B cell (primary cell): ENCODE measurements at regions of chr19 and their contacts with region 1.

Region 1: DNA sequence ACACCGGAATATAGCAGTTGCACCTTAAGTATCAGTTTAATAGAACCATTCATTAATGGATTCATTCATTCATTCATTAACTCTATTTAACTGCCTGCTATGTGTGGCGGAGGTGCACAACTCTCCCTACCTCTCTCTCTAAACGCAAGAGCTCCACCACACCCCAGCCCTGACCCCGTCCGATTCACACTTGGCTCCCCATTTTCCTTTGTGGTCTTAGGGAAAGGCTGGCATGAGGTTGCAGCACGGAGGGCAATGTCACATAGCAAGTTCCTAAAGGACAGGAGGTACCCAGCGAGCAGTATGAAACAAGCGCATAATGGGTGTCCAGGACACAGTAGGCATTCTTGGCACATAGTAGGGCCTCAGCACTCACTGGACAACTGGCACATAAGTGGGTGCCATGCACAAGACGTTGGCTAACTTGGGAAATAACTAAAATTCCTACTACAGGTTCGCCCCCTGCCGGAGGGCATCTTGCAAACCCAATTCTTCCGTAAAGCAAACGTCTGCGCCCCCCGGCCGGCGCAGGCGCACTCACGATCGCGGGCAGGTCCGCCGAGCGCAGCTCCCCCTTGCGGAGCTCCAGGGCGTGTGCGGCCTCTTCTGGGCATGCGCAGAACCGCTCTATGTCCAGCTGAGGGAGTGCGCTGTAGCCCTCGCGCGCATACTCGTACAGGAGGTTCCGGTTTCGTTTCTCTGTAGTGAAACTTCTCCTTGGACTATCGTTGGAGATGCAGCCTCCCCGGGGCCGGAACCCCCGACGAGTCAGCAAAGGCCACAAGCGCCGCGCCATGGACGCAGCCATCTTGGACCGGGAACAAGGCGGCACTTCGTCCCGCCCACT is at the start of gene SARS2:
- DNase-seq: no peak
- ATAC-seq: peak; percentile 69
- H3K4me3 ChIP-seq: peak within 1 kb of the TSS; percentile 79 to 93 (median 91)
- H3K4me3 Mint-ChIP-seq: peak within 1 kb of the TSS; percentile 99
- H3K27ac ChIP-seq: peak within 1 kb of the TSS; percentile 84 to 91
- H3K27ac Mint-ChIP-seq: peak within 1 kb of the TSS; percentile 99
- H3K4me1 ChIP-seq: peaks cover 19 to 28% of the 10 kb centered on the region in 2 donors
- H3K4me1 Mint-ChIP-seq: peaks cover 26% of the 10 kb centered on the region
- H3K27me3 ChIP-seq: no peaks in the 10 kb centered on the region
- H3K27me3 Mint-ChIP-seq: no peaks in the 10 kb centered on the region
- CTCF ChIP-seq: peak; percentile 100
- total RNA-seq, gene SARS2: 32.0 and 38.1 TPM in 2 replicates

Region 2: DNA sequence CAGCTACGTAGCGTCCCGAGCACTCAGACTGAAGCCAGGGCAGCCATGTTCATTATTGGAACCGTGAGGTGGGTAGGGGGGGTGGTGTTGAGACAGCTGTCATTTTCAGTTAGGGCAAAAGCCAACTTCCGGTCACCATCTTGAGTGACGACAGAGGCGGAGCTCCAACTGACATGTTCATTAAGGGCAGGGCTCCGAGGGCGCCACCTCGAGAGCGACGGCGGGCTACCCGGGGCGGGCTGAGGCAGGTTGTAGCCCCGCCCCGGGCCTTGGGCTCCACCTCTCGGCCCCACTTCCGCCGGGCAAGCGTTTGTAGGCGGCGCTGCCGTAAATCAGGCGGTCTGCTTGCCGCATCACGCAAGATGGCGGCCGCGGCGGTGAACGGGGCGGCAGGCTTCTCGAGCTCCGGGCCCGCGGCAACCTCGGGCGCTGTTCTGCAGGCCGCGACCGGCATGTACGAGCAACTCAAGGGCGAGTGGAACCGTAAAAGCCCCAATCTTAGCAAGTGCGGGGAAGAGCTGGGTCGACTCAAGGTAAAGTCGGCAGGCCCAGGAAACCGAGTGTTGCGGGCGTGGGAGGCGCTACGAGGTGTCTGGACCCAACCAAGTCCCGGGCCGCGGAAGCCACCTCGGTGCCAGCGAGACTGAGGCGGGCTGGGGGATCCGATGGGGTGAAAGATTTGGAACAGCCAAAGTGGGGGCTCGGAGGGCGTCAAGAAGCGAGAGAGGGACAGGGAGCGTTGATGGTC is 555.5 kb before region 1 on chr19 and contains the start of gene PSMD8:
- CTCF ChIA-PET with region 1: interaction called, 13 read pairs
- POLR2A ChIA-PET with region 1: no interaction called
- intact Hi-C with region 1: no loop called
- DNase-seq: peak; percentile 100
- ATAC-seq: peak; percentile 97
- H3K4me3 ChIP-seq: peak within 1 kb of the TSS; percentile 69 to 92 (median 80)
- H3K4me3 Mint-ChIP-seq: peak within 1 kb of the TSS; percentile 93
- H3K27ac ChIP-seq: peak within 1 kb of the TSS; percentile 88 to 90
- H3K27ac Mint-ChIP-seq: peak within 1 kb of the TSS; percentile 96
- H3K4me1 ChIP-seq: peaks cover 17 to 26% of the 10 kb centered on the region in 2 donors
- H3K4me1 Mint-ChIP-seq: peaks cover 26% of the 10 kb centered on the region
- H3K27me3 ChIP-seq: peaks cover 0 to 12% (median 0%) of the 10 kb centered on the region in 4 experiments
- H3K27me3 Mint-ChIP-seq: peaks cover 6% of the 10 kb centered on the region
- CTCF ChIP-seq: peak; percentile 18
- total RNA-seq, gene PSMD8: 77.1 and 88.1 TPM in 2 replicates

Region 3: DNA sequence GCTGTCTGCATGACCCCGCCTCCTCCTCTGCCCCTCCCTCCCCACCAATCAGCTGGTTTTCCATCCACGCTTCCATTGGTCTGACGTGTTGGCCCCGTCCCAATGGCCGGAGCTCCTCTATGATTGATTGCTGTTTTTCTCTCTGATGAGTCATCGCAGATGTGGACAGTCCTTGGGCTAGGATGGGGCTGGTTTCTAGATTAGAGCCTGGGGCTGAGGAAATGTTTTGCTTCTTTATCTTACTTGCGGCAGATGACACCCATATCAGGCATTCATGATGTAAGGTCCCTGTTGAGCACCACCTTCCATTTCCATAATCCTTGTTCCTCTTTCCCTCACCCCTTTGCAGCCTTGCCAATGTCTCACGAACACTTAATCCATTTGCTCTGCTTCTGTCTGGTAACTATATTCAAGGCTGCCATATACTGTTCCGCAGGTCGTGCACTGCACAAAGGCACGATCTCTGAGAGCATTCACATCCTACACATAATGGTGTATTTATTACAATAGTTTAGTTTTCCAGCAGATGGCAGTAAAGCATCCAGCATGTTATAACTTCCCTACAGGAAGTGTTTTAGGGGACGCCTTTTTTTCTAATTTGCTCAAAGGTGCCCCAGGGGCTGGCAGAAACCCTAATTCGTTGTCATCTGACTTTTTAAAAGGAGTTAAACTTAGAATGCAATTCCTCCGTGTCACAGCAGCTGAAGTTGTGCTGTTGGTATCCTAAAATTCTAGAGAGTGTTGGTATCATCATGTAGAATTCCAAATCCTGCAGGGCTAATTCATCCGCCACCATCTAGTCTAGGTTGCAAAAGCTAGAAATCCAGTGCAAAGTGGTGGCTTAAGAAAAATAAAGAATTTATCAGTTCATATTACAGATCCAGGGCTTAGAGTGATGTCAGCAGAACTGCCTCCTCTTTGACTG is 385.9 kb before region 1 on chr19:
- CTCF ChIA-PET with region 1: interaction called, 18 read pairs
- POLR2A ChIA-PET with region 1: no interaction called
- intact Hi-C with region 1: loop called (anchors 1 kb)
- DNase-seq: peak; percentile 78
- ATAC-seq: peak; percentile 81
- H3K4me3 ChIP-seq: peak overlapping the region in 1 of 5 experiments; percentile 38
- H3K4me3 Mint-ChIP-seq: no peak overlapping the region
- H3K27ac ChIP-seq: no peak overlapping the region
- H3K27ac Mint-ChIP-seq: peak overlapping the region; percentile 27
- H3K4me1 ChIP-seq: peaks cover 14 to 27% of the 10 kb centered on the region in 2 donors
- H3K4me1 Mint-ChIP-seq: peaks cover 21% of the 10 kb centered on the region
- H3K27me3 ChIP-seq: peaks cover 0 to 4% (median 0%) of the 10 kb centered on the region in 4 experiments
- H3K27me3 Mint-ChIP-seq: no peaks in the 10 kb centered on the region
- CTCF ChIP-seq: peak; percentile 76

Region 4: GRCh38 chr19:38647368-38647965 is 282.7 kb before region 1 on chr19 and contains the start of gene ACTN4:
- CTCF ChIA-PET with region 1: interaction called, 15 read pairs
- POLR2A ChIA-PET with region 1: interaction called, 8 read pairs
- intact Hi-C with region 1: loop called (anchors 1 kb)
- DNase-seq: peak; percentile 100
- ATAC-seq: peak; percentile 94
- H3K4me3 ChIP-seq: peak within 1 kb of the TSS; percentile 82 to 96 (median 91)
- H3K4me3 Mint-ChIP-seq: peak within 1 kb of the TSS; percentile 90
- H3K27ac ChIP-seq: peak within 1 kb of the TSS; percentile 40 to 68
- H3K27ac Mint-ChIP-seq: peak within 1 kb of the TSS; percentile 93
- H3K4me1 ChIP-seq: peaks cover 21 to 31% of the 10 kb centered on the region in 2 donors
- H3K4me1 Mint-ChIP-seq: peaks cover 37% of the 10 kb centered on the region
- H3K27me3 ChIP-seq: no peaks in the 10 kb centered on the region
- H3K27me3 Mint-ChIP-seq: no peaks in the 10 kb centered on the region
- CTCF ChIP-seq: no peak
- total RNA-seq, gene ACTN4: 154 and 164 TPM in 2 replicates

Region 5: DNA sequence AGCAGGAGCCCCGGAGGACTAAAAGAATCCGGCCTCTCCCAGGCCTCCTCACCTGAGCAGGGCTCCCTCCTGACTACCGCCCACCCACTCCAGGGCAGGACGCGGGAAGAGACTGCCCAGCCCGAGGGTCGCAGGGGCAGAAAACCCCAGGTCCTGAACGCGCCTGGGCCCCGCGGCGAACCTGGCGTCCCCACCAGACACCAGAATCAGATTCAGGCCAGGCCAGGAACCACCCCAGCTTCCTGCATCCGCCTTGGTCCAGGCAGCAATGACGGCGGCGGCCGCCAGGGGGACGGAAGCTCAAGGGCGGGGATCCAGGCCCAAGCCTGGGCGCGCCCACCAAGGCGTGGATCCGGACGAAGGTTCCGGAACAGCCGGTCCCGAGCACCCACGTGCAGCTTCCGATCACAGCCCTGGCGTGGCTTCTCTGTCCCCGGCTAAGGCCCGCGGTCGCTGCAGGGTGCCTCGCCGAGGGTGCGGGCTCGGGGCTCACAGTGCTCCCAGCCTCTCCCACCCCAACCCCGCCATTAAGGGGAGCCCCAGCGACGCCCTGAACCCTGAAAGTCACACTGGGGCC is 160.4 kb before region 1 on chr19:
- CTCF ChIA-PET with region 1: interaction called, 19 read pairs
- POLR2A ChIA-PET with region 1: interaction called, 17 read pairs
- intact Hi-C with region 1: loop called (anchors 2 kb)
- DNase-seq: peak; percentile 95
- ATAC-seq: peak; percentile 91
- H3K4me3 ChIP-seq: peak overlapping the region in 4 of 5 experiments; percentile 40 to 59 (median 47)
- H3K4me3 Mint-ChIP-seq: peak overlapping the region; percentile 81
- H3K27ac ChIP-seq: peak overlapping the region; percentile 75 to 77
- H3K27ac Mint-ChIP-seq: peak overlapping the region; percentile 89
- H3K4me1 ChIP-seq: peaks cover 6 to 12% of the 10 kb centered on the region in 2 donors
- H3K4me1 Mint-ChIP-seq: peaks cover 11% of the 10 kb centered on the region
- H3K27me3 ChIP-seq: no peaks in the 10 kb centered on the region
- H3K27me3 Mint-ChIP-seq: no peaks in the 10 kb centered on the region
- CTCF ChIP-seq: peak; percentile 86

Region 6: GRCh38 chr19:38899447-38900219 is 30.5 kb before region 1 on chr19 and contains the starts of genes NFKBIB and SIRT2:
- CTCF ChIA-PET with region 1: interaction called, 29 read pairs
- POLR2A ChIA-PET with region 1: interaction called, 3 read pairs
- intact Hi-C with region 1: loop called (anchors 1 kb)
- DNase-seq: peak; percentile 100
- ATAC-seq: peak; percentile 89
- H3K4me3 ChIP-seq: peak within 1 kb of the TSS; percentile 85 to 95 (median 92)
- H3K4me3 Mint-ChIP-seq: peak within 1 kb of the TSS; percentile 96
- H3K27ac ChIP-seq: peak within 1 kb of the TSS; percentile 89 to 99
- H3K27ac Mint-ChIP-seq: peak within 1 kb of the TSS; percentile 94
- H3K4me1 ChIP-seq: peaks cover 20 to 30% of the 10 kb centered on the region in 2 donors
- H3K4me1 Mint-ChIP-seq: peaks cover 38% of the 10 kb centered on the region
- H3K27me3 ChIP-seq: no peaks in the 10 kb centered on the region
- H3K27me3 Mint-ChIP-seq: no peaks in the 10 kb centered on the region
- CTCF ChIP-seq: no peak
- total RNA-seq, gene NFKBIB: 30.3 and 31.5 TPM in 2 replicates
- total RNA-seq, gene SIRT2: 41.8 and 42.4 TPM in 2 replicates